ENCODE measurements at regions of chr10 and their contacts with region 1.

Region 1: DNA sequence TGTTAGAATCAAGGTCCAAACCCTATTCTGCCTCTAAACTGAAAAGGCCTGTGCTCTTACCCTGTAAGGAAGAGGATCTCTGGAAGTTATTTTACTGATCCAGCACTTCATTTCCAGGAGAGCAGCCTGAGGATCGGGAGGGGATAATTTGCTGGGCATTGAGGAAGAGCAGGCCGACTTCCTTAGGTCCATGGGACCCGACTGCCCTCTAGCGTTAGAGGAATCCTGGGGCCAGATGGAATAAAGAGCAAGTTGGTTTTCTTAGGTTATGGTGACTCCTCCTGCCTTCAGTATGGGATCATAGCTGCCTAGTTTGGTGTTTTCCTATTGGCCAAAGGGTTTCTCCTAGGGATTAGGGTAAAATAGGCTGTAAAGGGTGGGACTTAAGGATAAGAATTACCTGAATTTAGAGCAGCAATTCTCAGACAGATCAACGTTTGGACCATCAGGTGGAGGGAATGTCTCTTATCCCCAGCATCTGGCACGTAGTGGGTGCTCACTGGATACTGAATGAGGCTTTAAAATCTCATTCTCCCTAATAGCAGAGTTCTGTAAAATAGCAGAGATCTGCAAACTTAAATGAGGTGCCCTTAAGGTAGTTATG is 40.0 kb upstream of the SORBS1 start:
- DNase-seq: peak; percentile 76 to 77
- H3K4me3 ChIP-seq: no peak overlapping the region
- H3K27ac ChIP-seq: no peak overlapping the region
- H3K4me1 ChIP-seq: no peaks in the 10 kb centered on the region
- H3K27me3 ChIP-seq: no peaks in the 10 kb centered on the region
- CTCF ChIP-seq: peak; percentile 49 to 94 (median 84)
- POLR2A ChIP-seq: no peak

Region 2: DNA sequence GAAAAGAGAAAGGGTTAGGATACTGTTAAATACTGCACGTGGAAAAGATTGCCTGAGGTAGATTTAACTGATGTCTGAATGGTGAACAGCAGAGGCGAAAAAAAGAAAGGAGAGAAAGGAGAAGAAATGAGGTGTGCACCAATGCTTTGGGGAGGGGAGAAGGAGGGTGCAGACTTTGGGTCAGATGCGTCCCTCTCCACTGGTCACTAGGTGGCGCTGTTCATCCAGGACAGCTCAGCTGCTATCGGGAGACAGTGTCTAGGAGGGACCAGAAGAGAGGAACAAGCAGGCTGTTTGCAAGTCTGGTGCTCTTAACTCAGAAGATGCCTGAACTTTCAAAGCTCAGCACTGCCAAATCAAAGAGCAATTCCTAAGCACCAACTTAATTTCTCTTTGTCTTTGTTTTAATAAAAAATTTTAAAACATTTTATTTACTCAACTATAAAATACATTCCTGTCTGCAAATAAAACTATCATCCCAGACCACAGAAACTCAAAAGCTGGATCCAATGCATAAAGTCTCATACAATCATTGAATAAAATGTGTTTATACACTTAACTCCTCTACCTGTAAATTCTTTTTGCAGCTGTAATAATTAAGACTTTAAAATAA is 226.5 kb before region 1 on chr10:
- intact Hi-C with region 1: loop called (anchors 5 kb)
- DNase-seq: peak; percentile 65 to 82
- H3K4me3 ChIP-seq: no peak overlapping the region
- H3K27ac ChIP-seq: no peak overlapping the region
- H3K4me1 ChIP-seq: peaks cover 0 to 8% of the 10 kb centered on the region in 2 donors
- H3K27me3 ChIP-seq: no peaks in the 10 kb centered on the region
- CTCF ChIP-seq: peak; percentile 72 to 95 (median 85)
- POLR2A ChIP-seq: no peak

Region 3: DNA sequence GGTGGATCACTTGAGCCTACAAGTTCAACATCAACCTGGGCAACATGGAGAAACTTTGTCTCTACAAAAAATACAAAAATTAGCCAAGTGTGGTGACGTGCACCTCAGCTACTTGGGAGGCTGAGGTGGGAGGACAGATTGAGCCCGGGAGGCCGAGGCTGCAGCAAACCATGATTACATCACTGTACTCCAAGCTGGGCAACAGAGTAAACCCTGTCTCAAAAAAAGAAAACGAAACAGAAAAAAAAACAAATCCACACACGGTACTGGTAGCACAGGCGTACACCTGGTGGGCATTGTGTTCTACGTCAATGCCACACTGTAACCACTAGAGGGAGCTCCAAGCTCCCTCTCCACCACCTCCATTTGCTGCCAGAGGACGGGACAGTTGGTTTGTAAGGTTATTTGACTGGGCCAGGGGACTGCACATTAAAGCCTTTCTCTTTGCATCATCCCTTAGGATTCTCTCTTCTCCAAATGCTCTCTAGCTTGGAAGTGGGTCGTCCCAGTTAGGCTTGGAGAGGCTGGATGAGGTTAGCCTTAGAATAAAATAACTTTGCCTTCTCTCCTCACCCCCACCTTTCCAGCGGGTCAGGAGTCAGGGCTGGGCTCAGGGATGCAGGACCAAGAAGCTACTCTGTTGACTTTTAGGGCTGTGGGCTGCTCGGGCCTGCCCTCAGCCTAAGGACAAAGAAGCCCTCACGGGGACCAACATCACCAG is 170.8 kb before region 1 on chr10:
- intact Hi-C with region 1: loop called (anchors 2 kb)
- DNase-seq: peak; percentile 42 to 52
- H3K4me3 ChIP-seq: no peak overlapping the region
- H3K27ac ChIP-seq: no peak overlapping the region
- H3K4me1 ChIP-seq: peaks cover 0 to 13% of the 10 kb centered on the region in 2 donors
- H3K27me3 ChIP-seq: no peaks in the 10 kb centered on the region
- CTCF ChIP-seq: peak; percentile 75 to 97 (median 92)
- POLR2A ChIP-seq: no peak

Region 4: DNA sequence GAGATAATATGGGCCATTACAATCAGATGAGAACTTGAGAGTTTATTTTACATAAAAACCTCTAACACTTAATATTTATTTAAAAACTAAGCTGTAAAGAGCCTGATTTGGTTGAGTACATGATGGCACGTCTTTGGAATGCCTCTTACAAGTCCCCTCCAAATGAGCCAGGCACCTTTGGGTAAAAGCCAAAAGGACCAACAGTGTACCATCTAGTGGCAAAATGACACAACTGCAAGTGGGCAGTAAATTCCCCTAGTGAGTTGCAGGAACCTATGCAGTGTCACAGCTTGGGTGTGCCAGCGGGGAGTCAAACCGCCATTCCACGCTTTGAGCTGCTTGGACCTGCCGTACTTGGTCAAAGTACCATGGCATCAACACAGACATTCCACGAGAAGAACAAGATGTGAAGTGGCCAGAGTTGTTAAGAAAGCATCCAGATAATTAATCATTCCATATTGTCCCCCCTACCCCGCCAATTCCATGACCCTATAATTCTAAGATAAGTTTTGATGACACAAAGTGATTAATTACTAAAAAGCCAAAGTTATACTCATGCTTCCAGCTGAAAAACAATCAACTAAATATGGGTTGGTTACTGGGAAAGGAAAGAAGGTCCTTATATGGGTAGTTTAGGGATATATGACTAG is 155.3 kb before region 1 on chr10:
- intact Hi-C with region 1: no loop called
- DNase-seq: peak; percentile 63
- H3K4me3 ChIP-seq: no peak overlapping the region
- H3K27ac ChIP-seq: peak overlapping the region; percentile 41 to 74 (median 66)
- H3K4me1 ChIP-seq: peaks cover 15 to 26% of the 10 kb centered on the region in 2 donors
- H3K27me3 ChIP-seq: no peaks in the 10 kb centered on the region
- CTCF ChIP-seq: peak; percentile 77 to 90 (median 88)
- POLR2A ChIP-seq: no peak

Measured in thyroid gland (tissue), 4 donors.